HAP-1 (cell line): ENCODE measurements at regions of chr5 and their contacts with region 1.

Region 1: GRCh38 chr5:148730943-148731861 is 76.9 kb upstream of the HTR4 start:
- DNase-seq: peak; percentile 78 to 79
- H3K4me3 ChIP-seq: no peak overlapping the region
- H3K4me1 ChIP-seq: no peaks in the 10 kb centered on the region
- H3K27me3 ChIP-seq: peaks cover 6% of the 10 kb centered on the region; the same call in 1 of the 2 replicates

Region 2: DNA sequence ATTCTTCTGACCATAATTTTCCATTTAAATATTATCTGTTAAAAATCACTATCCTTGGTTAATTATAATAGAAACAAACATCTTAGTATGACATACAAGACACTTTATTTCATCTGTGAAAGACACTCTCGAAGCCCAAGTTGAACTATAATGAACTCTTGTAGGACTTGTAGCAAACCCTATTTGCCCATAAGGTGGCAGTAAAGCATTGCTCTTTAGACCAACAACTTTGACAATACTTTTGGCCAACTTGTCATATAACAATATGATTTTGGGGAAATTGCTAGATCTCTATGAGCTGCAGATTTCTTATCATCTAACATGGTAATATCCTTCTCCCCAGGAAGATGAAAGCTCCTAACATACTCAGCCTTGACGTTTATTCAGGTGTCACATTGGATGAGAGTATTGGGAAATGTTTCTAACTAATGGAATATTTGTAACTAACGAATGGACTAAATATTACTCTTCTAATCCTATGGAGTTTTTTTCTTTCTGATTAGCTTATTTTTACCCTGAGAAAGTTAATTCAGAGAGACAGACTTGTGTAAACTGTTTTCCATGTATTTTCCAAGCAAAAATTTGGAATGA is 551.9 kb before region 1 on chr5:
- in situ Hi-C with region 1: loop called (anchors 25 kb)
- DNase-seq: peak; percentile 12 to 49
- H3K4me3 ChIP-seq: no peak overlapping the region
- H3K4me1 ChIP-seq: no peaks in the 10 kb centered on the region
- H3K27me3 ChIP-seq: no peaks in the 10 kb centered on the region

Region 3: DNA sequence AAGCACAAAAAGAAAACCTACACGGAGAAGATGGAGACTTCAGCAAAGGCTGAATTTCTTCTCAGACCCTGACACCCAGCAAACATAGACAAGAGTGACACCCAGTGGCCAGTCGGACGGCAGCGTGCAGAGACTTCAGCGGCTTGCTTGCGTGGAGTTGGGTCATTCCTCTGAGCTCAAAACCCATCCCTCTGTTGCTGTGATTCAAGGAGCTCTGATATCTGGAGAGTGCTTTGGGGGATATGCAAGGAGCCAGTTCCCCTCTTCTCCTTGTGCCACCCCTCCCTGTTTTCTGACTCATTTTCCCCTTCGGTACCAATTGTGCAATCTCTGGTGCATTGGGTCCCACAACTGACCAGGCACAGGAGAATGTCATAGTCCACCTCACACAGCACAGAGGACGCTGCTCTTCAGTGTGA is 304.2 kb after region 1 on chr5:
- in situ Hi-C with region 1: loop called (anchors 5 kb)
- DNase-seq: peak; percentile 52 to 75
- H3K4me3 ChIP-seq: no peak overlapping the region
- H3K4me1 ChIP-seq: no peaks in the 10 kb centered on the region
- H3K27me3 ChIP-seq: 0 out of 2 replicates have a peak, but pooled peaks cover 2% of the 10 kb centered on the region